Activated CD4-positive, alpha-beta memory T cell treated with anti-CD3 and anti-CD28 coated beads for 36 hours (primary cell): ENCODE measurements at regions of chr7 and their contacts with region 1.

Region 1: GRCh38 chr7:98878365-98879165 is at the start of gene TRRAP:
- DNase-seq: peak; percentile 83
- H3K4me3 Mint-ChIP-seq: peak within 1 kb of the TSS; percentile 93
- H3K27ac Mint-ChIP-seq: peak within 1 kb of the TSS; percentile 96
- H3K4me1 Mint-ChIP-seq: peaks cover 34% of the 10 kb centered on the region
- H3K27me3 Mint-ChIP-seq: no peaks in the 10 kb centered on the region
- total RNA-seq, gene TRRAP: 44.3 to 48.7 TPM

Region 2: DNA sequence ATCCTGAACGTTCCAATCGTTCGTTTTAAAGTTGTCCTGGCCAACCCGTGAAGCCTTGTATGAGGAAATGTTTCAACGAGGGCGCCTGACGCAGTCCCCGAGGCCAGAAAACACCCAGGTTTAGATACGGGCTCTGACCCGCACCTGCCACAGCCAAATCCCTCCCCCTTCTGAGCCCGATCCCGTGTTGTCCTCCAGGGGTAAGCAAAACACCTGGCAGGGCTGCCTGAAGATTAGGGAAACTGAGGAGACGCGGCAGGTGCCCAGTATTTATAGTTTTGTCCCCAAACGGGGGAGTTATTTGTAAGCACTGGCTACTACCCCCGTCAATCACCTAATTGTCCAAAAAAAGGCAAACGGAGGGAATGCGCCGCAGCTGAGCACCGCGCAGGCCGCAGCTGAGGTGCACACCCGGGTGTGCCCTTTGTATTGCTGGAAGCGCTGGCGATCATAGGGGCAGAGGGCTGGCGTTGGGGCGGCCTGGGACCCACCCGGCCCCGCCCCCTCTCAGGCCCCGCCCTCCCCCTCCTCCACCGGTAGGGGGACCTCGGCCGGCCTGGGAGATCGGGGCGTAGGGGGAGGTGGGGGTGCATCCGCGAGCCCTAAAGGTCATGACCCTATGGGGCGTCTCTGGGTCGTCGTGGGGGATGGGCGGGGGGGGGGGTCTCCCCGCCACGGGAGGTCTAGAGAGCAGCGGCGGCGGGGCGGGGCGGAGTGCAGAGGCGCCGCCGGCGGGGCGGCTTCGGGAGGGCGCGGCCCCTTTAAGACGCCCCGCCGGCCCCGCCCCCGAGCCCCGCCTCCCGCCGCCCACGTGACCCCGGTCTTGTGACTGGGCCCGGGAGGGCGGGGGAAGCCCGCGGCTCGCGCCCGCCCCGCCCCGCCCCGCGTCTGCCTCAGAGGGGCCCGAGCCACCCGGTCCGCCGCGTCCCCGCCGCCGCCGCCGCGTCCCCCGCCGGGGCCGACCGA is 597.5 kb before region 1 on chr7 and contains the start of gene BRI3:
- CTCF ChIA-PET with region 1: interaction called, 4 read pairs
- POLR2A ChIA-PET with region 1: no interaction called
- intact Hi-C with region 1: loop called (anchors 2 kb)
- DNase-seq: peak; percentile 95
- H3K4me3 Mint-ChIP-seq: peak within 1 kb of the TSS; percentile 79
- H3K27ac Mint-ChIP-seq: peak within 1 kb of the TSS; percentile 66
- H3K4me1 Mint-ChIP-seq: peaks cover 30% of the 10 kb centered on the region
- H3K27me3 Mint-ChIP-seq: no peaks in the 10 kb centered on the region
- total RNA-seq, gene BRI3: 52.0 to 52.9 TPM

Region 3: GRCh38 chr7:98598846-98599615 is 279.5 kb before region 1 on chr7:
- CTCF ChIA-PET with region 1: no interaction called
- POLR2A ChIA-PET with region 1: no interaction called
- intact Hi-C with region 1: no loop called
- DNase-seq: no peak
- H3K4me3 Mint-ChIP-seq: no peak overlapping the region
- H3K27ac Mint-ChIP-seq: no peak overlapping the region
- H3K4me1 Mint-ChIP-seq: no peaks in the 10 kb centered on the region
- H3K27me3 Mint-ChIP-seq: peaks cover 4% of the 10 kb centered on the region

Region 4: DNA sequence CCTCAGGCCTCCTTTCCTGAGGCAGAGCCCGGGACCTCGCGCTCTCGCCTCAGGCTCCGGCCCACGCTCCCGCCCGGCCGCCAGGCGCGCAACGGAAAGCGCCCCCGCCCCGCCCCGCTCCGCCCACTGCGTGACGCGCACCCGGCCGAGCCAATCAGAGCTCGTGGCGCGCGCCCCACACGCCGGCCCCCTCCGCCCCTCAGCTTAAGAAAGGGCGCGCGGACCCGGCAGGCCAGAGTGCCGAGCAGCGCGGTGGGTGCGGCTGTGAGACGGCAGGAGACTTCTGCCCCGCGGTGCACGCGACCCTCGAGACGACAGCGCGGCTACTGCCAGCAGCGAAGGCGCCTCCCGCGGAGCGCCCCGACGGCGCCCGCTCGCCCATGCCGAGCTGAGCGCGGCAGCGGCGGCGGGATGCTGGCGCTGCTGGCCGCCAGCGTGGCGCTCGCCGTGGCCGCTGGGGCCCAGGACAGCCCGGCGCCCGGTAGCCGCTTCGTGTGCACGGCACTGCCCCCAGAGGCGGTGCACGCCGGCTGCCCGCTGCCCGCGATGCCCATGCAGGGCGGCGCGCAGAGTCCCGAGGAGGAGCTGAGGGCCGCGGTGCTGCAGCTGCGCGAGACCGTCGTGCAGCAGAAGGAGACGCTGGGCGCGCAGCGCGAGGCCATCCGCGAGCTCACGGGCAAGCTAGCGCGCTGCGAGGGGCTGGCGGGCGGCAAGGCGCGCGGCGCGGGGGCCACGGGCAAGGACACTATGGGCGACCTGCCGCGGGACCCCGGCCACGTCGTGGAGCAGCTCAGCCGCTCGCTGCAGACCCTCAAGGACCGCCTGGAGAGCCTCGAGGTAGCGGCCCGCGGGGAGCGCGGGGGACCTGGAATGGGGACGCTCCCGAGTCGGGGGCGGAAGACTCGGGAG is 261.3 kb before region 1 on chr7 and contains the start of gene NPTX2:
- CTCF ChIA-PET with region 1: no interaction called
- POLR2A ChIA-PET with region 1: no interaction called
- intact Hi-C with region 1: no loop called
- DNase-seq: peak; percentile 19
- H3K4me3 Mint-ChIP-seq: no peak within 1 kb of the TSS
- H3K27ac Mint-ChIP-seq: no peak within 1 kb of the TSS
- H3K4me1 Mint-ChIP-seq: peaks cover 2% of the 10 kb centered on the region
- H3K27me3 Mint-ChIP-seq: peaks cover 53% of the 10 kb centered on the region
- total RNA-seq, gene NPTX2: not detected

Region 5: GRCh38 chr7:98930921-98931320 is 52.4 kb after region 1 on chr7:
- CTCF ChIA-PET with region 1: interaction called, 3 read pairs
- POLR2A ChIA-PET with region 1: interaction called, 5 read pairs
- intact Hi-C with region 1: loop called (anchors 1 kb)
- DNase-seq: peak; percentile 52
- H3K4me3 Mint-ChIP-seq: peak overlapping the region; percentile 53
- H3K27ac Mint-ChIP-seq: peak overlapping the region; percentile 82
- H3K4me1 Mint-ChIP-seq: peaks cover 20% of the 10 kb centered on the region
- H3K27me3 Mint-ChIP-seq: no peaks in the 10 kb centered on the region

Region 6: GRCh38 chr7:99143853-99144672 is 265.5 kb after region 1 on chr7 and contains the start of gene SMURF1:
- CTCF ChIA-PET with region 1: no interaction called
- POLR2A ChIA-PET with region 1: no interaction called
- intact Hi-C with region 1: loop called (anchors 2 kb)
- DNase-seq: peak; percentile 77
- H3K4me3 Mint-ChIP-seq: peak within 1 kb of the TSS; percentile 89
- H3K27ac Mint-ChIP-seq: peak within 1 kb of the TSS; percentile 83
- H3K4me1 Mint-ChIP-seq: peaks cover 36% of the 10 kb centered on the region
- H3K27me3 Mint-ChIP-seq: peaks cover 2% of the 10 kb centered on the region
- total RNA-seq, gene SMURF1: 14.0 to 16.2 TPM

Region 7: GRCh38 chr7:99374103-99375064 is 495.8 kb after region 1 on chr7 and contains the start of gene ARPC1B:
- CTCF ChIA-PET with region 1: no interaction called
- POLR2A ChIA-PET with region 1: no interaction called
- intact Hi-C with region 1: loop called (anchors 2 kb)
- DNase-seq: peak; percentile 92
- H3K4me3 Mint-ChIP-seq: peak within 1 kb of the TSS; percentile 84
- H3K27ac Mint-ChIP-seq: peak within 1 kb of the TSS; percentile 86
- H3K4me1 Mint-ChIP-seq: peaks cover 32% of the 10 kb centered on the region
- H3K27me3 Mint-ChIP-seq: no peaks in the 10 kb centered on the region
- total RNA-seq, gene ARPC1B: 432 to 435 TPM